Activated CD4-positive, alpha-beta memory T cell treated with anti-CD3 and anti-CD28 coated beads for 36 hours (primary cell): ENCODE measurements at regions of chr19 and their contacts with region 1.

Region 1: GRCh38 chr19:3479177-3479833 is 1.0 kb downstream of the SMIM24 start:
- DNase-seq: peak; percentile 60
- H3K4me3 Mint-ChIP-seq: no peak overlapping the region
- H3K27ac Mint-ChIP-seq: no peak overlapping the region
- H3K4me1 Mint-ChIP-seq: peaks cover 7% of the 10 kb centered on the region
- H3K27me3 Mint-ChIP-seq: peaks cover 2% of the 10 kb centered on the region

Region 2: GRCh38 chr19:3365836-3366752 is 113.2 kb before region 1 on chr19 and contains the start of gene NFIC:
- CTCF ChIA-PET with region 1: no interaction called
- POLR2A ChIA-PET with region 1: no interaction called
- intact Hi-C with region 1: no loop called
- DNase-seq: peak; percentile 67
- H3K4me3 Mint-ChIP-seq: peak within 1 kb of the TSS; percentile 70
- H3K27ac Mint-ChIP-seq: peak within 1 kb of the TSS; percentile 11
- H3K4me1 Mint-ChIP-seq: peaks cover 47% of the 10 kb centered on the region
- H3K27me3 Mint-ChIP-seq: no peaks in the 10 kb centered on the region
- total RNA-seq, gene NFIC: 19.7 to 19.9 TPM

Region 3: DNA sequence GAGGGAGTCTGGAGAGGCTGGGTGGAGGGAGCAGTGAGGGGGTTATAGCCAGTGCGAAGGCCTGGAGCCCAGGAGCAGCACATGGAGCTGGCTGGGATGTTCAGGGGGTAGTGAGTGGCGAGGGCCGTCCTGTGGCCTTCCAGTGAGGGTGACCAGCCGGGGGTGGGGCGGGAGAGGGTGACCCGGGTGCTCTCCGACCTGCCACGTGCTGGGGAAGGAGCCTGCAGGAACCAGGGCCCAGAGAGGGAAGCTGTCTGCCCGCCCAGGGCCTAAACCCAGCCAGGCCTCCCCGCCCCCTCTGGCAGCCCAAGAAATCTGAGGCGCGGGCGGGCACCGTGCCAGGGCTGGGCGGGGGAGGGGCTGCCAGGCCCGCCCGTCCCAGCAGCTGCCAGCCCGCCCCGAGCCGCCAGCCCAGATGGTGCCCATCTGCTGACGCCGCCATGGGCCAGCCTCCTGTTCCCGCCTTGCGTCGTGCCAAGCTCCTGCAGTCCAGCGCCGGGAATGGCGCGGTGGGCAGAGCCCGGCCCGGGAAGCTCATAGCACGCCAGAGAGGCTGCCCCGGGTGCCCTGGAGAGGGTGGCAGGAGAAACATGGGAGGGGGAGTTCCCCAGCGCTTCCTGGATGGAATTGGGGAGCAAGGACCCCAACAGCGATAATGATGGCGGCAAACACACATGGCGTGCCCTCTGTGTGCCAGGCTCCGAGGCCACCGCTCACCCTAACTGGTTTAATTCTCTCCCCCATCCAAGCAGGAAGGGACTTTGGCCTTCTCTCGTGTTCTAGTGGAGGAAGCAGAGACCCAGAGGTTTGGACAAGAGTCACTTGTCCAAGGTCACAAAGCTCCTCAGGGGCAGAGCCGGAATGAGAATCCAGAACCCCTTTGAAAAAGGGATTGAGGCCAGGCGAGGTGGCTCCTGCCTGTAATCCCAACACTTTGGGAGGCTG is 91.4 kb before region 1 on chr19:
- CTCF ChIA-PET with region 1: no interaction called
- POLR2A ChIA-PET with region 1: no interaction called
- intact Hi-C with region 1: no loop called
- DNase-seq: no peak
- H3K4me3 Mint-ChIP-seq: no peak overlapping the region
- H3K27ac Mint-ChIP-seq: no peak overlapping the region
- H3K4me1 Mint-ChIP-seq: peaks cover 11% of the 10 kb centered on the region
- H3K27me3 Mint-ChIP-seq: no peaks in the 10 kb centered on the region

Region 4: DNA sequence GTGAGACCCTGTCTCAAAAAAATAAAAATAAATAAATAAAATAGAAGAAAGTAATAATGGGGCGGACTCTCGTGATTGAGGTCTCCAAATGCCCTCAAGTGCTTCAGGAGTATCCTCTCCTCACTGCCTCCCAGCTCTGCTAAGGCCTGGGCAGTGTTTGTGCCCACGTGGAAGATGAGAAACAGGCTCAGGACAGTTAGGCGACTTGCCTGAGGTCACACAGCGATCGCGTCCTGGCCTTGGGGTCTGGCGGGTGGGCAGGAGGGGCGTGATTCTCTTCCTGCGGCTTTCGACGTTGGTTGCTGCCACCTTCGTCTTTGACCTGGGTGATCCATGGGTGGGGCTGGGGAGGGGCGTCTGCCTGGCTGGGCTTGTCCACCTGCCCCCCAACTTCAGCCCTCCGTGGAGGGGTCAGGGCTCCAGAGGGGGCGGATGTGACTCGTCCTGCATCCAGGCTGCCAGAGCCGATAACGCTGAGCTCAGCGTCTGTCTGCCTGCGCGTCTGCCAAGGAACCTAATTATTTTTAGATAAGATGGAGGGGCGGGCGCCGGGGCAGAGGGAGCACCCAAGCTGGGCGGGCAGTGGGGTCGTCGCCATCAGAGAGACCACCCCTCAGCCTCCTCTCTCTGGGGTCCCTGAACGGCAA is 56.0 kb before region 1 on chr19:
- CTCF ChIA-PET with region 1: no interaction called
- POLR2A ChIA-PET with region 1: no interaction called
- intact Hi-C with region 1: no loop called
- DNase-seq: no peak
- H3K4me3 Mint-ChIP-seq: no peak overlapping the region
- H3K27ac Mint-ChIP-seq: no peak overlapping the region
- H3K4me1 Mint-ChIP-seq: no peaks in the 10 kb centered on the region
- H3K27me3 Mint-ChIP-seq: no peaks in the 10 kb centered on the region

Region 5: GRCh38 chr19:3494051-3494450 is 14.7 kb after region 1 on chr19:
- CTCF ChIA-PET with region 1: interaction called, 32 read pairs
- POLR2A ChIA-PET with region 1: no interaction called
- intact Hi-C with region 1: no loop called
- DNase-seq: peak; percentile 68
- H3K4me3 Mint-ChIP-seq: peak overlapping the region; percentile 32
- H3K27ac Mint-ChIP-seq: peak overlapping the region; percentile 77
- H3K4me1 Mint-ChIP-seq: peaks cover 11% of the 10 kb centered on the region
- H3K27me3 Mint-ChIP-seq: no peaks in the 10 kb centered on the region

Region 6: DNA sequence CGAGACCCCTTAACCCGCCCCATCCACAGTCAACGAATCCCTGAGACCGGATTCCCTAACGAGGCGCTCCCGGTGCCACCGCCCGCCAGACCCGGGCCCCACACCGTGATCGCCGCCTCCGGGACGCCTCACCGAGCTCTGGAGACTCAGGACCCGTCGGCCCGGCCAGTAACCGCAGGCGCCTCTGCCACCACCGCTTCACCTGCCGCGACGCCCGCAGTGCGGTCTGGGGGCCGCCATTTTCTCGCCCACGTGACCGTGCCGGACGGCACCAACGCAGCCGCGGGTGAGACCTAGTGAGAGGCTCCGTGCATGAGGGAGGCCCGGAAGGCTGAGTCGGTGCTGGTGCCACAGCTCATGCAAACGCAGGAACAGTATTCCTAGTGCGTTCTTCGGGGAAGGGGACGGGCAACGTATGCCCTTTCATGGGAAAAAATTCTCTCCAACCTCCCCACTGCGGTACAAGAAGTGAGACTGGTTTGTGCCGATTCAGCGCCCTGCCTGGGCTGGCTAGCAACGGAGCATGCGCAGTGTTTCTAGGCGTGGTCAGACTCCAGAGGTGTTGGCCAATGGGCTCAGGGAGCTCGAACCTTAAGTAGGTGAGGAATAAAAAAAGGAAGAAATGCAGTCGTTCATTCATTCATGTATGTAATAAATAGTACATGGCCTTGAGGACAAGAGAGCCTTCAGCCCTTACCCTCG is 21.3 kb after region 1 on chr19 and contains the start of gene DOHH:
- CTCF ChIA-PET with region 1: interaction called, 32 read pairs
- POLR2A ChIA-PET with region 1: no interaction called
- intact Hi-C with region 1: no loop called
- DNase-seq: peak; percentile 98
- H3K4me3 Mint-ChIP-seq: peak within 1 kb of the TSS; percentile 85
- H3K27ac Mint-ChIP-seq: peak within 1 kb of the TSS; percentile 95
- H3K4me1 Mint-ChIP-seq: peaks cover 21% of the 10 kb centered on the region
- H3K27me3 Mint-ChIP-seq: no peaks in the 10 kb centered on the region
- total RNA-seq, gene DOHH: 15.0 to 17.0 TPM